RWPE1 (cell line): ENCODE measurements at regions of chr15 and their contacts with region 1.

Region 1: DNA sequence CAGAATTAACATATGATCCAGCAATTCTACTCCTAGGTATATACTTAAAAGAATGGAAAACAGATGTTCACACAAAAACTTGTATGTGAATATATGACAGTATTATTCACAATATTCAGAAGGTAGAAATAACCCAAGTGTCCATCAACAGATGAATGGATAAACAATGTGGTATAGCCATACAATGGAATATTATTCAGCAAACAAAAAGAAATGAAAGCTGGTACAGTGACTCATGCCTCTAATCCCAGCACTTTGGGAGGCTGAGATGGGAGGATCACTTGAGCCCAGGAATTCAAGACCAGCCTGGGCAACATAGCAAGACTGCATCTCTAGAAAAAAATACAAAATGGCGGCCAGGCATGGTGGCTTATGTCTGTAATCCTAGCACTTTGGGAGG is 129.4 kb downstream of the RBPMS2 start:
- DNase-seq: no peak
- H3K27ac ChIP-seq: no peak overlapping the region
- CTCF ChIP-seq: no peak

Region 2: GRCh38 chr15:64452988-64453688 is 192.9 kb before region 1 on chr15:
- CTCF ChIA-PET with region 1: no interaction called
- POLR2A ChIA-PET with region 1: interaction called, 13 read pairs
- DNase-seq: no peak
- H3K27ac ChIP-seq: peak overlapping the region; percentile 74
- CTCF ChIP-seq: no peak

Region 3: DNA sequence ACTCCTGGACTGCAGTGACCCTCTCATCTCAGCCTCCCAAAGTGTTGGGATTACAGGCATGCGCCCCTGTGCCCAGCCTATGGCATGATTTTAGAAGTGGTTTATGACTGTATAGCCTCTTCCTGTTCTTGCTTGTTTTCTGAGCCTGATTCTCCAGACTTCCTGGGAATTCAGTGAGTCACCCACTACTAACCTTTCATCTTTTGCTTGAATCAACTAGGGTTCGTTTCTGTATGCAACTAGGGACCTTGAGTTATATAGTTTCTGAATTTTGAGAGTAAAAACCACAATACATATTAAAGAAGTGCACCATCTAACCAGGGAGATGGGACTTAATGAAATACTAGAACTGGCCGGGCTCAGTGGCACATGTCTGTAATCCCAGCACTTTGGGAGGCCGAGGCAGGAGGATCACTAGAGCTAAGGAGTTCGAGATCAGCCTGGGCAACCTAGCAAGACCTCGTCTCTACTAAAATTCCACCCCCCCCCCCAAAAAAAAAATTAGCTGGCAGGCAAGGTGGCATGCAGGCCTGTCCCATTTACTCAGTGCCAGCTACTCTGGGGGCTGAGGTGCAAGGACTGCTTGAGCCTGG is 109.7 kb before region 1 on chr15:
- CTCF ChIA-PET with region 1: no interaction called
- POLR2A ChIA-PET with region 1: interaction called, 13 read pairs
- DNase-seq: peak; percentile 92
- H3K27ac ChIP-seq: peak overlapping the region; percentile 78
- CTCF ChIP-seq: no peak